HEK293T (cell line): ENCODE measurements at regions of chr12 and their contacts with region 1.

Region 1: DNA sequence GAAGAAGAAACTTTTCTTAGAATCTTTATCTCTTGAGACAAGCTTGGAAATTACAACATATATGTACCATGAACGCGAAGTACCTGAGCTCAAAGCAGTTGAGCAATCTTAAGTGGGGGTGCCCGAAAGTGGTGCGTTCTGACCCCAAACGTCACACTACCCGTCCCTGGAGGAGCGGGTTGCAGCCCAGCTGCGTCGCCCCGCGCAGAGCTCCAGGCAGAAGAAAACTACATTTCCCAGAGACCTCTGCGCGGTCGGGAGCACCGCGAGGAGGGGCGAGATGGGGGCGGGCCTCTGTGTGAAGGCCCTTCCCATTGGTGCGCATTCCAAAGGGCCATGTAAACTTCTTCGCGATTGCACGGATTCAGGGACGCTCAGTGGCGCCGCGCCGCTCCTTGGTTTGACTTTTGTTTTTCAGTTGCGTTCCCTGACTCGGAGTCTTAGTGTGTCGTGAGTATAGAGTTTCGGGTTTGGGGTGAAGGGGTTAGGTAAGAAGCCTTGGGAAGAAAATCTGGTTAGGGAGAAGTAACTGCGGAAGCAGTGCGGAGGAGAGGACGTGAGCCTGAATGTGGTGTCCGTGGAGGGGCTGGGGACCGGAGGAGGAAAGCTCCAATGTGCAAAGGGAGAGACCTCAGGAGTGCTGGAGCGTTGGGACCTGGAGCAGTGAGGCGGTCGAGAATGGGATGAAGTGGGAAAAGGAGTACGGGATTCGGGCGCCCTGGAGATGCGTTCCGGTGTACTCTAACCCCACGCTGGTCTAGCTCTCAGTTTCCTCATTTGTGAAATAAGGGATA is at the start of gene CCDC77:
- DNase-seq: peak; percentile 96

Region 2: GRCh38 chr12:389139-390096 is 12.0 kb before region 1 on chr12 and contains the start of gene KDM5A:
- CTCF ChIA-PET with region 1: interaction called, 3 read pairs
- POLR2A ChIA-PET with region 1: interaction called, 42 read pairs
- DNase-seq: peak; percentile 90